ENCODE measurements at regions of chr7 and their contacts with region 1.

Region 1: GRCh38 chr7:47991741-47992311 is 12.4 kb upstream of the HUS1 start:
- DNase-seq: peak; percentile 69 to 87
- H3K4me3 ChIP-seq: peak overlapping the region in 3 of 4 experiments; percentile 29 to 54 (median 43); a peak in 5 of 8 replicates
- H3K27ac ChIP-seq: peak overlapping the region; percentile 42; the same call in 1 of the 2 replicates
- H3K4me1 ChIP-seq: peaks cover 0 to 5% (median 0%) of the 10 kb centered on the region in 4 experiments; a peak in 5 of 7 replicates
- H3K27me3 ChIP-seq: no peaks in the 10 kb centered on the region
- CTCF ChIP-seq: peak; percentile 70 to 73 (median 71)
- EP300 ChIP-seq: no peak; a peak in 1 of 3 replicates
- POLR2A ChIP-seq: peak in 1 of 2 experiments; percentile 47; a peak in 2 of 3 replicates
- RAD21 ChIP-seq: peak; percentile 77 to 83

Region 2: GRCh38 chr7:47571331-47572093 is 420.3 kb before region 1 on chr7:
- CTCF ChIA-PET with region 1: no interaction called
- POLR2A ChIA-PET with region 1: no interaction called
- DNase-seq: no peak
- H3K4me3 ChIP-seq: no peak overlapping the region
- H3K27ac ChIP-seq: no peak overlapping the region
- H3K4me1 ChIP-seq: peaks cover 0 to 21% (median 11%) of the 10 kb centered on the region in 4 experiments; a peak in 6 of 7 replicates
- H3K27me3 ChIP-seq: no peaks in the 10 kb centered on the region
- CTCF ChIP-seq: no peak
- EP300 ChIP-seq: no peak
- POLR2A ChIP-seq: no peak
- RAD21 ChIP-seq: no peak

Region 3: GRCh38 chr7:47698231-47698785 is 293.5 kb before region 1 on chr7:
- CTCF ChIA-PET with region 1: no interaction called
- POLR2A ChIA-PET with region 1: no interaction called
- DNase-seq: no peak
- H3K4me3 ChIP-seq: no peak overlapping the region
- H3K27ac ChIP-seq: no peak overlapping the region
- H3K4me1 ChIP-seq: no peaks in the 10 kb centered on the region
- H3K27me3 ChIP-seq: no peaks in the 10 kb centered on the region
- CTCF ChIP-seq: no peak
- EP300 ChIP-seq: no peak
- POLR2A ChIP-seq: no peak
- RAD21 ChIP-seq: no peak

Region 4: DNA sequence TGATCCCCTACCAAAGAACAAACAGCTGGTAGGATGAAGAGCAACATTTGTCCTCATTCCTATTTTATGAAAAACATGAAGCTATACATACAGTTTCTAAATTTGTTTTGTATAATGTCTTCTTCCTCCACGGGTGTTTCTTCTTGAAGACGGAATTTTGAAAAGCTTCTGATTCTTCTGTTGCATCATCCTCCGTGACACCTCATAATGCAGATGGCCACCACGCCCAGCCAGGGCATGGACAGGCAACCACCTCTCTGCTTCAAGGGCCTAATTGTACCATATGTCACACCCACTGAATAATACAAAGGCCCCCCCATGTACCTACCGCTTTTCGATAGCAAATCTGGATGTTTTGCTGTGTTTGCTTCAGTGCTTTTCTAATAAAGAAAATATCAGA is 37.1 kb after region 1 on chr7 and contains the start of gene SUN3:
- CTCF ChIA-PET with region 1: no interaction called
- POLR2A ChIA-PET with region 1: no interaction called
- DNase-seq: no peak
- H3K4me3 ChIP-seq: no peak within 1 kb of the TSS
- H3K27ac ChIP-seq: no peak within 1 kb of the TSS
- H3K4me1 ChIP-seq: no peaks in the 10 kb centered on the region
- H3K27me3 ChIP-seq: peaks cover 0 to 3% (median 1%) of the 10 kb centered on the region in 4 experiments; a peak in 2 of 7 replicates
- CTCF ChIP-seq: no peak
- EP300 ChIP-seq: no peak
- POLR2A ChIP-seq: no peak
- RAD21 ChIP-seq: no peak
- total RNA-seq, gene SUN3: not detected in 2 replicates

Region 5: DNA sequence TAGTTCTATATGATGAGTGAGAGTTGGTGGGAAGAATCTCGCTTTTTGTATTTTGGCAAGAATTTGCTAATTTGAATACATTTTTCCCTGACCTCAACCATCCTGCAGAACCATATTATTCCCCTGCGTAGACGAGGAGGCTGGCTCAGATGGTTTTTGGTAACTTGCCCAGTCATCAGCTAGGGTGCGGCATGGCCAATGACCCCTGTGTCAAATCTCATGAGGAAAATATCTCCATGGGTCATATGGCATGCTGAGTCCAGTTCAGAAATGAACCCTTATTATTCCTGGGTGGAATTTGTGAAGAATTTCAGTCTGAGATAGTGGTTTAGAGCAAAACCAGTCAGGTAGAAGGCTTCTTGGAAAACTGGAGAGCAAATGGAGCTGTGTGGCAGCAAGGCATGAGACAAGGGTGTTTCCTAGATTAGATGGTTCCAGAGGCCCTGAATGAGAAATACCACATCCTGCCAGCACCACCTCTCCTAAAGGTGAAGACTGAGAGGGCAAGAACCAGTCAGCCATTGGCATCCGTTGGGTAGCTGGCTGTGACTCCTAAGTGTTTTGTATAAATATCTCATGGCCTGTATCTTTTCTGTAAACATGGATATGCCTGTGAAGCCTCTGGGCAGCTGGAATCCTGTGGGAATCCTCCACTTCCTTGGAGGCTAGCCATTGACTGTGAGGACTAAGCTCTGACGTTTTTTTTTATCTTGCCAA is 91.4 kb after region 1 on chr7:
- CTCF ChIA-PET with region 1: interaction called, 10 read pairs
- POLR2A ChIA-PET with region 1: interaction called, 36 read pairs
- DNase-seq: no peak
- H3K4me3 ChIP-seq: no peak overlapping the region
- H3K27ac ChIP-seq: no peak overlapping the region
- H3K4me1 ChIP-seq: peaks cover 5 to 11% (median 5%) of the 10 kb centered on the region in 4 experiments
- H3K27me3 ChIP-seq: no peaks in the 10 kb centered on the region
- CTCF ChIP-seq: no peak
- EP300 ChIP-seq: no peak
- POLR2A ChIP-seq: no peak
- RAD21 ChIP-seq: no peak

Region 6: GRCh38 chr7:48101968-48102367 is 110.1 kb after region 1 on chr7:
- CTCF ChIA-PET with region 1: interaction called, 19 read pairs
- POLR2A ChIA-PET with region 1: no interaction called
- DNase-seq: peak in 1 of 2 experiments; percentile 69
- H3K4me3 ChIP-seq: no peak overlapping the region
- H3K27ac ChIP-seq: no peak overlapping the region
- H3K4me1 ChIP-seq: no peaks in the 10 kb centered on the region
- H3K27me3 ChIP-seq: no peaks in the 10 kb centered on the region
- CTCF ChIP-seq: peak; percentile 46 to 84 (median 72)
- EP300 ChIP-seq: no peak
- POLR2A ChIP-seq: no peak
- RAD21 ChIP-seq: peak; percentile 31 to 49